ENCODE measurements at regions of chr19 and their contacts with region 1.

Region 1: GRCh38 chr19:7326105-7326877 is 22.4 kb upstream of the ARHGEF18 start:
- DNase-seq: peak; percentile 66
- H3K4me3 Mint-ChIP-seq: no peak overlapping the region
- H3K27ac Mint-ChIP-seq: no peak overlapping the region
- H3K4me1 Mint-ChIP-seq: no peaks in the 10 kb centered on the region
- H3K27me3 Mint-ChIP-seq: peaks cover 10% of the 10 kb centered on the region

Region 2: DNA sequence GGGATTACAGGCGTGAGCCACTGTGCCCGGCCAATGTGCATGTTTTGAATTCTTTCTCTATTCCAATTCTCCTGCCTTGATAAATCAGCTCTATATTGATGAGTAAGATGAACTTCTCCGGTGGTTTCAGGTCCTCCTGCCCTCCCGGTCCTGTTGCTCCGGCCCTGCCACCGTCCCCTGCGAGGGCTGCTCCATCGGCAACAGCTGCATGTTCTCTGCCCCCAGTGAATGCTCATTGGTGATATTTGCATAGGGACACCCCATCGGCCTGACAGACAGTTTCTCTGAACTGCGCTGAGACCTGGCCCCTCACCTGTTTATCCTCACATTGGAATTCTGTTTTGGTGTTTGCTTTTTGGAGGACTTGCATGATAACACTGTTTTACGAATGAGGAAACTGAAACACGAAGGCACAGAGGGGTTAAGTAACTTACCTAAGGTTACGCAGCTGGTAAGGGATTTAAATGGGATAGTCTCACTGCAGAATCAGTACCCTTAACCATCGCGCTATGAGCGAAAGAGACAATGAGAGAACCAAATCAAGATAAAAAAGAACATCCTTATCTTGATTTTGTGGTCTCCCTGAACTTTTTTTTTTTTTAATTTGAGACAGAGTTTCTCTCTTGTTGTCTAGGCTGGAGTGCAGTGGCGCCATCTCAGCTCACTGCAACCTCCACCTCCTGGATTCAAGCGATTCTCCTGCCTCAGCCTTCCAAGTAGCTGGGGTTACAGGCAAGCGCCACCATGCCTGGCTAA is 224.6 kb before region 1 on chr19:
- CTCF ChIA-PET with region 1: interaction called, 10 read pairs
- DNase-seq: peak; percentile 23
- H3K4me3 Mint-ChIP-seq: no peak overlapping the region
- H3K27ac Mint-ChIP-seq: no peak overlapping the region
- H3K4me1 Mint-ChIP-seq: peaks cover 36% of the 10 kb centered on the region
- H3K27me3 Mint-ChIP-seq: peaks cover 28% of the 10 kb centered on the region

Region 3: DNA sequence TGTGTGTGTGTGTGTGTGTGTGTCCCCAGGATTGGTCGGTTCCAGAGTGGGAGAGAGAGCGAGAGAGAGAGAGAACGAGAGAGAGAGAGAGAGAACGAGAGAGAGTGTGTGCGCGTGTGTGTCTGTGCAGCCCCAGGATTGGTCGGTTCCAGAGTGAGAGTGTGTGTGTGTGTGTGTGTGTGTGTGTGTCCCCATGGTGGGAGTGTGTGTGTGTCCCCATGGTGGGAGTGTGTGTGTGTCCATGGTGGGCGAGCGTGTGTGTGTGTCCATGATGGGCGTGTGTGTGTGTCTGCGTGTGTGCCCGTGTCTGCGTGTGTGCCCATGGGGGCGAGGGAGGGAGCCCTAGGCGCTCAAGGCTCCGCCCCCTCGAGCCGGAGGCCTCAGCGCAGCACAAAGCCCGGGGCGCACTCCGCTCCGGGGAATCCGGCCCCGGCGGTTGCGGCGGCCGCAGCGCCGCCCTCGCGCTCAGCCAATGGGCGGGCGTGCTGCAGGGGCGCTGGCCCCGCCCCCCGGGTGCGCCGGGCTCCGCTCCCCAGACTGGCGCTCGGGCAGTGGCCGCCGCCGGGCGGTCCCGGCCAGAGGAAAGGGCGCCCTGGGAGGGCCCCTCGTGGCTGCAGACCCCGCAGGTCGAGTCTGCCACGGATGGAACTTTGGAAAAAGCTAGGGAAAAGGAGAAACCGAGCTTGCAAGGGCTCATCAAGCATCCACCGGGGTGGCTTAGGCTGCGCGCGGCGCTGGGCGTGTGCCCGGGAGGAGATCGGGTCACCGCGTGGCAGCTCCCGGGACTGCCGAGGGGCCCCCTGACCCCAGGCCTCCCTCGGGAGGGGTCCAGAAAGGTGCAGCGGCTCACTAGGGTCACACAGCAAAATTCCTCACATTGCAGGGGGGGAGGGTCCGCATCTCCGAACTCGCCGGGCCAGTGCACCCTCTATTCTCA is 128.3 kb before region 1 on chr19:
- CTCF ChIA-PET with region 1: no interaction called
- DNase-seq: peak; percentile 92
- H3K4me3 Mint-ChIP-seq: peak overlapping the region; percentile 74
- H3K27ac Mint-ChIP-seq: peak overlapping the region; percentile 92
- H3K4me1 Mint-ChIP-seq: peaks cover 18% of the 10 kb centered on the region
- H3K27me3 Mint-ChIP-seq: peaks cover 59% of the 10 kb centered on the region

Region 4: GRCh38 chr19:7224209-7224686 is 102.0 kb before region 1 on chr19:
- CTCF ChIA-PET with region 1: no interaction called
- DNase-seq: no peak
- H3K4me3 Mint-ChIP-seq: no peak overlapping the region
- H3K27ac Mint-ChIP-seq: no peak overlapping the region
- H3K4me1 Mint-ChIP-seq: peaks cover 5% of the 10 kb centered on the region
- H3K27me3 Mint-ChIP-seq: peaks cover 13% of the 10 kb centered on the region

Region 5: GRCh38 chr19:7287722-7288500 is 38.4 kb before region 1 on chr19:
- CTCF ChIA-PET with region 1: no interaction called
- DNase-seq: no peak
- H3K4me3 Mint-ChIP-seq: no peak overlapping the region
- H3K27ac Mint-ChIP-seq: no peak overlapping the region
- H3K4me1 Mint-ChIP-seq: no peaks in the 10 kb centered on the region
- H3K27me3 Mint-ChIP-seq: peaks cover 32% of the 10 kb centered on the region

Measured in activated naive CD4-positive, alpha-beta T cell treated with anti-CD3 and anti-CD28 coated beads, Interleukin-2, amount 10 ng/mL, durations not matched to agents 7 days and 5 days (primary cell).